Calu3 (cell line): ENCODE measurements at regions of chr17 and their contacts with region 1.

Region 1: DNA sequence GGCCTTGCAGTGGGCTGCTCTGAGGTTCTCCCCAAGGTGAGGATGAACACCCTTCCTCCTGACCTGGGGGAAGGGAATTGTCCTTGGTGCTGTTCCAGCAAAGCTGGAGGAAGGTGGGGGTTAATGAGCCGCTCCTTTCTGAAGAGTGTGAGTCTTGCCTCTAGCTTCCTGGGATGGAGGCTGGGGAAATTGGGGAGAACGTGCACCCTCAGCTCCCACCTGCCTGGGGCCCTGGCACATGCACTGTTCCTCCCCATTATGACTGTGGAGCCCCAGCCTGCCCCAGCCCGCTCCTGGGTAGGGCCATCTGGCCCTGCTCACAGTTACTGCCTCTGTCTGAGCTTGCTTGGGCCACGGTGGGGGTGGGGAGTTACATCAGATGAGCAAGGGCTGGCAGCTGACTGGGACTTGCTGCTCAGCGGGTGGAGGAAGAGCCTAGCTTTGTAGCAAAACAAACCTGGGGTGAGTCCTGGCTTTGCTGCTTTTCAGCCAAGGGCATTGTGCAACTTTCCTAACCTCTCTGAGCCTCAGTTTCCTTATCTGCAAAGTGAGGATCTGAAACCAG is 11.1 kb downstream of the TNS4 start:
- DNase-seq: no peak
- H3K4me3 Mint-ChIP-seq: no peak overlapping the region
- H3K27ac Mint-ChIP-seq: no peak overlapping the region
- H3K4me1 Mint-ChIP-seq: peaks cover 30% of the 10 kb centered on the region
- H3K27me3 Mint-ChIP-seq: peaks cover 71% of the 10 kb centered on the region
- CTCF ChIP-seq: no peak

Region 2: DNA sequence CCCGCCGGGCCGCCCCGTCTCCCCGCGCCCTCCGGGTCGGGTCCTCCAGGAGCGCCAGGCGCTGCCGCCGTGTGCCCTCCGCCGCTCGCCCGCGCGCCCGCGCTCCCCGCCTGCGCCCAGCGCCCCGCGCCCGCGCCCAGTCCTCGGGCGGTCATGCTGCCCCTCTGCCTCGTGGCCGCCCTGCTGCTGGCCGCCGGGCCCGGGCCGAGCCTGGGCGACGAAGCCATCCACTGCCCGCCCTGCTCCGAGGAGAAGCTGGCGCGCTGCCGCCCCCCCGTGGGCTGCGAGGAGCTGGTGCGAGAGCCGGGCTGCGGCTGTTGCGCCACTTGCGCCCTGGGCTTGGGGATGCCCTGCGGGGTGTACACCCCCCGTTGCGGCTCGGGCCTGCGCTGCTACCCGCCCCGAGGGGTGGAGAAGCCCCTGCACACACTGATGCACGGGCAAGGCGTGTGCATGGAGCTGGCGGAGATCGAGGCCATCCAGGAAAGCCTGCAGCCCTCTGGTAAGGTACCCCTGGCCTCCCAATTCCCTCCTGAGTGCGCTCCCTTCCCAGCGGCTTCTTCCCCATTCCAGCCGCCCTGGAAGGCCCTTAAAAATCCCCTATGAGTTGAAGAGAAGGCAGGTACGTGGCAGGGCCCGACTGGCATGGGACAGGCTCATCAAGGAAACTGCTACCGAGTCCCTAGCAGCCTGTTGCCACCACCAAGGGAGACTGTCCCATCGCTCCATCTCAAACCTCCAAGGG is 46.6 kb before region 1 on chr17:
- CTCF ChIA-PET with region 1: interaction called, 1,658 read pairs
- intact Hi-C with region 1: no loop called
- DNase-seq: peak; percentile 100
- H3K4me3 Mint-ChIP-seq: peak overlapping the region; percentile 1
- H3K27ac Mint-ChIP-seq: no peak overlapping the region
- H3K4me1 Mint-ChIP-seq: peaks cover 35% of the 10 kb centered on the region
- H3K27me3 Mint-ChIP-seq: peaks cover 37% of the 10 kb centered on the region
- CTCF ChIP-seq: no peak

Region 3: GRCh38 chr17:40450175-40450574 is 40.2 kb before region 1 on chr17:
- CTCF ChIA-PET with region 1: interaction called, 1,658 read pairs
- intact Hi-C with region 1: no loop called
- DNase-seq: peak; percentile 100
- H3K4me3 Mint-ChIP-seq: no peak overlapping the region
- H3K27ac Mint-ChIP-seq: no peak overlapping the region
- H3K4me1 Mint-ChIP-seq: peaks cover 48% of the 10 kb centered on the region
- H3K27me3 Mint-ChIP-seq: peaks cover 17% of the 10 kb centered on the region
- CTCF ChIP-seq: no peak

Region 4: DNA sequence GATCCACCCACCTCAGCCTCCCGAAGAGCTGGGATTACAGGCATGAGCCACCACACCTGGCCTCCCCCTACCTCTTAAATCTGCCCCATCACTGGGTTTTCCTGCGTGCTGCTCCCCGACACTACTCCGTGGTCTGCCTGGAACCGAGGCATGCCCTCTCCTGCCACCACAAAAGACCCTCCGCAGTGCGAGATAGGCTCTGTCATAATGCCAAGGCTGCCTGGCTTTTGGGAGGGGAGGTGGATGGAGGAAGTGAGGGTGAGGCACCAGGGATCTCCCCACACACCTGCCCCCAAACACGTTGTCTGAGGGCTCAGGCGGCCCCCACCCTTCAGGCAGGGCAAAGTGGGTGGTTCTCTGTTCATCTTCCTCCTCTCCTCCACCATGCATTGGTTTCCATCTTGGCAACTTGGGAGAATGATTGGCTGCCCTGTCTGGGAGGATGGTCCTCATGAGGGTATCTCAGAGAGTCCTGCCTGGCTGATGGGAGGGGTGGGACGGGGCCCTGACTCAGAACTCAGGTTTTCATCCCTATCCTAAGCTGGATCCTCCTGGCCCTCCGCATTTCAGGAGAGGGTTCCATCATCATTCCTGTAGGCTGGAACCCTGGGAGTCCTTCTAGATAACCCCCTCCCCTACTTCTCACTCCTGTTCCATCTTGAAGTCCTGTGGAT is 23.9 kb before region 1 on chr17:
- CTCF ChIA-PET with region 1: interaction called, 1,658 read pairs
- intact Hi-C with region 1: no loop called
- DNase-seq: no peak
- H3K4me3 Mint-ChIP-seq: no peak overlapping the region
- H3K27ac Mint-ChIP-seq: no peak overlapping the region
- H3K4me1 Mint-ChIP-seq: no peaks in the 10 kb centered on the region
- H3K27me3 Mint-ChIP-seq: peaks cover 74% of the 10 kb centered on the region
- CTCF ChIP-seq: no peak

Region 5: DNA sequence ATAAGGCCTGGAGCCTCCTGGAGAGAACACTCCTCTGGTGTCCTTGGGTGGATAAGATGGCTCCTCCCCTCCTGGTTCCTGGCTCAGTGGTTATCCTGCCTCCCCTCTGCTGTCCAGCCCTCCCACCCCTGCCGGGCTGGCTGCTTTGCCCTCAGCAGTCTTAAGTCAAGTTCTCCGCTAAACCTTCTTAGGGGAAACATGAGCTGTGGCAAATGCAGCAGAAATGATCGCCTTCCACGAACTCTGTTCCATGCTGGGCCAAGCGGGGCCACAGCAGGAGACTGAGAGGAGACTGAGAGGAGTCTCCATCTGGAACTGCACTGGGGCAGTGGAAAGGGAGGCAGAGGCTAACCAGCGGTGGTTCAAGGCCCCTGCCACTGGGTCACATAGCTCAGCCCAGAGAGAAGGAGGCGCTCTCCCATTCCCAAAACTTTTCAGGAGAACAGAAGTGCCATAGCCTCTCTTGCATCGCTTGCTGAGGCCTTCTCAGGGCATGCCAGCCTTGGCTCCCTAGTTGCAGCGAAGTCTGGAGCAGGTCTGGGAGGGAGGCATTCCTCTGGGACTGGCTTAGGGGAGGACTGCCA is 15.9 kb before region 1 on chr17:
- CTCF ChIA-PET with region 1: interaction called, 1,658 read pairs
- intact Hi-C with region 1: no loop called
- DNase-seq: no peak
- H3K4me3 Mint-ChIP-seq: no peak overlapping the region
- H3K27ac Mint-ChIP-seq: no peak overlapping the region
- H3K4me1 Mint-ChIP-seq: no peaks in the 10 kb centered on the region
- H3K27me3 Mint-ChIP-seq: peaks cover 65% of the 10 kb centered on the region
- CTCF ChIP-seq: no peak

Region 6: GRCh38 chr17:40510328-40510648 is 19.9 kb after region 1 on chr17:
- CTCF ChIA-PET with region 1: interaction called, 4,142 read pairs
- intact Hi-C with region 1: no loop called
- DNase-seq: peak; percentile 88
- H3K4me3 Mint-ChIP-seq: no peak overlapping the region
- H3K27ac Mint-ChIP-seq: no peak overlapping the region
- H3K4me1 Mint-ChIP-seq: peaks cover 41% of the 10 kb centered on the region
- H3K27me3 Mint-ChIP-seq: peaks cover 61% of the 10 kb centered on the region
- CTCF ChIP-seq: no peak

Region 7: DNA sequence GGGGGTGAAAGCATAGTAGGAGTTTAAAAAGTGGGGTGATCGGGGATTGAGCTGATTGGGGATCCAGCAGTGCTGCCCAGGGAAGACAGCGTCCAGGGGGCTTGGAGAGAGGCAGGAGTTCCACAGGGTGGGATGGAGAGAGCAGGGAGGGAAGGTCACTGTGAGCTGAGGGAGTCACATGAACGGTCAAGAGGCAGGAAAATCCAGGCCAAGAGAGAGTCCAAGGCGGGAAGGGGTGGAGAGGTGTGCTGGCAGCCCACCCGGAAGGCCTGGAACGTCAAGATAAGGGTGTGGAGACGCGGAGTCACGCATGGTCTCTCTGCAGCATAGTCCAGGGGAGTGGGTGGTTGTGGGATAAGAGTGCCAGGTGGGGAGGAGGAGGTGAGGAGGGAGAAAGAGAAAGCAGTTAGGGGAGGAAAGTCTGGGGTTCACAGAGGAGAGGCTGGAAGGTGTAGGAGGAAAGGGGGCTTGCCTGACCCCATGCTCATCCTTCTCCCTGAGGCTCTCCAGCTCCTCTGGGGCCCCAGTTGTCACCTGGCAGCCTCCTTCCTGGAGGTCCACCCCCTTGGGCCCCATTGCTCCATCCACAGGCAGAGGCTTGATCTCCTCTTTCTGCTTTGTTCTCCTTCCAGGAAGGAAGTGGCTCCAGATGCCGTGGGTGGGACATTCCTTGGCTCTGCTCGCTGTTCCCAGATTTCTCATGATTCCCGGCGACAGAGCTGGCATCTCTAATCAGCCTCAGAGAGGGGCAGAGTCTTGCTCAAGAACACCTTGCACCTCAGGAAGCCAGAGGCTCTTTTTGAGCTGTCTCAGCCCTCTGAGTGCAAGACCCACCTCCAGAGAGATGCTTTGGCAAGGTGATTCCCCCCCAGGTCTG is 46.2 kb after region 1 on chr17:
- CTCF ChIA-PET with region 1: interaction called, 4,142 read pairs
- intact Hi-C with region 1: no loop called
- DNase-seq: peak; percentile 68
- H3K4me3 Mint-ChIP-seq: no peak overlapping the region
- H3K27ac Mint-ChIP-seq: no peak overlapping the region
- H3K4me1 Mint-ChIP-seq: peaks cover 24% of the 10 kb centered on the region
- H3K27me3 Mint-ChIP-seq: peaks cover 85% of the 10 kb centered on the region
- CTCF ChIP-seq: no peak